Activated CD8-positive, alpha-beta T cell treated with anti-CD3 and anti-CD28 coated beads, Interleukin-2, amount 10 ng/mL, durations not matched to agents 7 days and 5 days (primary cell): ENCODE measurements at regions of chr3 and their contacts with region 1.

Region 1: DNA sequence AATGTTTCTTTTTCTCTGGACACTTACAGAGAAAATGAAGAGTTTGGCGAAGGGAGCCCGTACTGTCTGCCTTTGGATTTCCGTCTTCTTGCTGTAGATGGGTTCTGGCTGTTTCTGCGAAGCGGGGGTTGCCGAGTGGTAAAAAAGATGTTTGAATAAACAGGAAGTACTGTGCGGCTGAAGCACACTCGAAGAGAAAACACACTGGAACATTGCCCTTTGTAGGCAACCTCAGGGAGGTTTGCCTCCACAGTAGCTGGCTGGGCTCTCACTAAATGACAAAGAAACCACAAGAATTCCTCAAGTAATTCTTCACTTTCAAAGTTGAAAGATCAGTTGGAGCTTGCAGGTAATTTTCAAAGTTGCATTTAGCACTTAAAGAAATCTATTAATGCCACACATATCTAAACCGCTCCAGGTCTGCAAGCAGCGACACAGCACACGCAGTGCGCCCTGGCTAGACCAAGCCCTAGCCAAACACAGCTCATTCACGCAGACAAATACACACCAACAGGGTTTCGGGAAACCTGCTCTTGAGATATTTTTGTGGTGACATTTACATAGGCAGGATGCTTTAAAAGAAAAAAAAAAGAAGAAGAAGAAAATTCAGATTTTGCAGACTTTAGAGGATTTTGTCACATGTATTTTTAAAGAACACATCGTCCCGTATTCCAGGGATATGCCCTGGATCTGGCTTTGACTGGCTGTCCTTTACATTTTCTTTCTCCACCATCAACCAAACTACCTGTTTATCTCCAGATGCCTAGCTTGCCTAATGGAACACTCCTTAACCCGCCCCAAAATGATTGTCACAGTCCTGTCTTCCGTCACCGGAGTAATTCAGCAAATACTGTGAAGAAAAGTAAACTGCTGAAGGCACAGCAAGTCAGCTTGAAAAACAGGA is 452.8 kb downstream of the FOXP1 start:
- DNase-seq: peak; percentile 86
- ATAC-seq: peak; percentile 74
- H3K4me3 Mint-ChIP-seq: peak overlapping the region; percentile 98
- H3K27ac Mint-ChIP-seq: peak overlapping the region; percentile 94
- H3K4me1 Mint-ChIP-seq: peaks cover 72% of the 10 kb centered on the region
- H3K27me3 Mint-ChIP-seq: no peaks in the 10 kb centered on the region

Region 2: GRCh38 chr3:71095511-71096291 is 35.0 kb before region 1 on chr3:
- CTCF ChIA-PET with region 1: no interaction called
- POLR2A ChIA-PET with region 1: no interaction called
- DNase-seq: no peak
- ATAC-seq: no peak
- H3K4me3 Mint-ChIP-seq: no peak overlapping the region
- H3K27ac Mint-ChIP-seq: no peak overlapping the region
- H3K4me1 Mint-ChIP-seq: peaks cover 65% of the 10 kb centered on the region
- H3K27me3 Mint-ChIP-seq: no peaks in the 10 kb centered on the region

Region 3: DNA sequence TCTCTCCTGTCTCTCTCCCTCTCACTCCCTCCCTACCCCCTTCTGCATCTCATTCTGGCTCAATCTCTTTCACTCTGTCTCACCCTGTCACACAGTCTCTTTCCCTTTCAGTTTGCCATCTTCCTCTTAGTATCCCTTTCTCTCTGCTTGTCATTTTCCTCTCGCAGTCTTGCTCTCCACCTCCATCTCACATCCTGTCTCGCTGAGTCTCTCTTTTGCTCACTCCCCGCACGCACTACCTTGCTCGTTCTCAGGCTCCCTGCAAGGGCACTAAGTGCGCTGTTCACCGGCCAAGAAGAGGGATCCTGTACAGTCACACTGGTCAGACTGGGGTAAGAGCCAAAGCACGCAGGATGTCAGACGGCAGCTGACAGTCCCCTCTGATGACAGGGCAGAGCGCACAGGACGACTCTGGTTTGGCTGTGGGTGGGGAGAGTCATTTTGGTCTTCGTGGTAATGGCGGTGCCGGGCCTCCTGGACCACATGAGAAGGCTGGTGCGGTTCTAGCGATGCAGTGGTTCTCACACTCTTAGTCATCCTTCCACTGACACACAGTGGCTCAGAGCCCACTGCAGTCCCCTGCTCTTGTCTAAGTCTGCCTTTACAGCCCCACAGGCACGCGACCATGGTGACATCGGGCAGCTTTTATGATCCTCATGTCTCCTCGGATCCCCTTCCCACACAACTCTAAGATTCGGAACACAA is 96.0 kb after region 1 on chr3:
- CTCF ChIA-PET with region 1: interaction called, 3 read pairs
- POLR2A ChIA-PET with region 1: interaction called, 15 read pairs
- DNase-seq: peak; percentile 92
- ATAC-seq: peak; percentile 92
- H3K4me3 Mint-ChIP-seq: peak overlapping the region; percentile 73
- H3K27ac Mint-ChIP-seq: peak overlapping the region; percentile 95
- H3K4me1 Mint-ChIP-seq: peaks cover 60% of the 10 kb centered on the region
- H3K27me3 Mint-ChIP-seq: no peaks in the 10 kb centered on the region

Region 4: GRCh38 chr3:71258116-71258515 is 127.4 kb after region 1 on chr3:
- CTCF ChIA-PET with region 1: no interaction called
- POLR2A ChIA-PET with region 1: no interaction called
- DNase-seq: no peak
- ATAC-seq: no peak
- H3K4me3 Mint-ChIP-seq: no peak overlapping the region
- H3K27ac Mint-ChIP-seq: peak overlapping the region; percentile 23
- H3K4me1 Mint-ChIP-seq: peaks cover 28% of the 10 kb centered on the region
- H3K27me3 Mint-ChIP-seq: no peaks in the 10 kb centered on the region

Region 5: GRCh38 chr3:71305231-71306206 is 174.8 kb after region 1 on chr3:
- CTCF ChIA-PET with region 1: interaction called, 18 read pairs
- POLR2A ChIA-PET with region 1: interaction called, 13 read pairs
- DNase-seq: peak; percentile 46
- ATAC-seq: peak; percentile 38
- H3K4me3 Mint-ChIP-seq: peak overlapping the region; percentile 89
- H3K27ac Mint-ChIP-seq: peak overlapping the region; percentile 92
- H3K4me1 Mint-ChIP-seq: peaks cover 80% of the 10 kb centered on the region
- H3K27me3 Mint-ChIP-seq: no peaks in the 10 kb centered on the region